ENCODE measurements at regions of chr1 and their contacts with region 1.

Region 1: DNA sequence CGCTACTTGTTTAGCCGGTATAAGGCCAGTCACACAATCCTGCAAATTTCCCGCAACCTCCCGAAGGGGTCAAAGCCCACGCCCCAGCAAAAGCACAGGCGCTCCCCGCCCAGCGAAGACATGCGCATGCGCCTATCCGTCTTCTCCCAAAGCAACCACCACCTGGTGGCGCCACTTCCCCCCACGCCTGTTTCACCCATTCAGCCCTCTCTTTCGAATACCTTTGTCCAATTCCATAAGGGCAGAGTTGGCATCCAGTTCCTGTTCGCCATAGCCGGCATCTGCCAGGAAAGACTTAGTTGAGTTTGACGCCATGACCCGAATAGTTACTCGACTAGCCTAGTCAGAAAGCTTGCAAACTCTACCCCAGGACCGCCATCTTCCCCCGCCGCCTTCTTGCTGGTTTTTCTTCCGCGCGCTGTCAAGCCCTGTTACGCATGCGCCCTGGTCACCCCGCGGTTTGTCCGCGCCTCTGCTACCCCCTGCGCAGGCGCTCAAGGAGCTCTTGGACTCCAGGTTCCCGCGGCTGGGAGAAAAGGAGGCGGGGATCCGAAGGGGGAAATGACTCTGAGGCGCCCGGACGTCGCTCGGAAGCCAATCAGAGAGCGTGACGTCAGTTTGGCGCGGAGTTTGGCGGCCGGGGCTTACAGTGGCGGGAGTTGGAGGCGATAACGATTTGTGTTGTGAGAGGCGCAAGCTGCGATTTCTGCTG is at the starts of genes DTL and INTS7:
- DNase-seq: peak; percentile 96 to 99
- H3K4me3 ChIP-seq: peak within 1 kb of the TSS; percentile 64 to 78
- H3K27ac ChIP-seq: peak within 1 kb of the TSS; percentile 77 to 85
- H3K4me1 ChIP-seq: peaks cover 0 to 12% of the 10 kb centered on the region in 2 donors
- H3K27me3 ChIP-seq: no peaks in the 10 kb centered on the region
- CTCF ChIP-seq: peak; percentile 85 to 95 (median 90)
- total RNA-seq, gene DTL: not detected
- total RNA-seq, gene INTS7: 10.5 TPM

Region 2: DNA sequence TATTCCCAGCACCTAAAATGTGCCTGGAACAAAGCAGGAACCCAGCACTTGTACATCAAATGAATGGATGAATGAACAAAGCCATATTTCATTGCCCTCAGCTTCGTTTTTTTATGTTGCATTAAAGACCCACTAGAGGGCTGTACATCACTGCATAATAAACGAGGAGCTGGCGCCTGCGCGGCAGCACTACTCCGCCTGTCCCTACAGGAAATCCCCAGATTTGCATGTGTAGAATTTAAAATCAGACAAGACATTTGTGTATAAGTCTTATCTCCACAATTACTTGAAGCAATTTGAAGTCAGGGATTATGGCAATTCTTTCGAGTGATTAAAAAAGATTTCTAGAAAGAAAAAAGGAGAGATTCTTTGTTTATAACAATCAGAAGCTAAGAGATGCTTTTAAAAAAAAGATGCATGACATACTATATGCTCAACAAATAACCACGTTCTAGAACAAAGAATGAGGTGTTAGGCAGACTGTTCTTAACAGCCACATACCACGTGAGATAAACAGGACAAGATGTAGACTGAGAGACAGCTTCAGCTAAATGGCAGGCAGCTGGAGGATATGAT is 354.4 kb before region 1 on chr1:
- intact Hi-C with region 1: loop called (anchors 1 kb)
- DNase-seq: peak in 1 of 2 donors; percentile 75
- H3K4me3 ChIP-seq: no peak overlapping the region
- H3K27ac ChIP-seq: no peak overlapping the region
- H3K4me1 ChIP-seq: no peaks in the 10 kb centered on the region
- H3K27me3 ChIP-seq: no peaks in the 10 kb centered on the region
- CTCF ChIP-seq: peak; percentile 53 to 71 (median 69)

Region 3: GRCh38 chr1:212012034-212012740 is 23.1 kb before region 1 on chr1:
- intact Hi-C with region 1: loop called (anchors 1 kb)
- DNase-seq: peak in 1 of 2 donors; percentile 78
- H3K4me3 ChIP-seq: no peak overlapping the region
- H3K27ac ChIP-seq: no peak overlapping the region
- H3K4me1 ChIP-seq: no peaks in the 10 kb centered on the region
- H3K27me3 ChIP-seq: no peaks in the 10 kb centered on the region
- CTCF ChIP-seq: peak; percentile 84 to 94 (median 92)

Region 4: DNA sequence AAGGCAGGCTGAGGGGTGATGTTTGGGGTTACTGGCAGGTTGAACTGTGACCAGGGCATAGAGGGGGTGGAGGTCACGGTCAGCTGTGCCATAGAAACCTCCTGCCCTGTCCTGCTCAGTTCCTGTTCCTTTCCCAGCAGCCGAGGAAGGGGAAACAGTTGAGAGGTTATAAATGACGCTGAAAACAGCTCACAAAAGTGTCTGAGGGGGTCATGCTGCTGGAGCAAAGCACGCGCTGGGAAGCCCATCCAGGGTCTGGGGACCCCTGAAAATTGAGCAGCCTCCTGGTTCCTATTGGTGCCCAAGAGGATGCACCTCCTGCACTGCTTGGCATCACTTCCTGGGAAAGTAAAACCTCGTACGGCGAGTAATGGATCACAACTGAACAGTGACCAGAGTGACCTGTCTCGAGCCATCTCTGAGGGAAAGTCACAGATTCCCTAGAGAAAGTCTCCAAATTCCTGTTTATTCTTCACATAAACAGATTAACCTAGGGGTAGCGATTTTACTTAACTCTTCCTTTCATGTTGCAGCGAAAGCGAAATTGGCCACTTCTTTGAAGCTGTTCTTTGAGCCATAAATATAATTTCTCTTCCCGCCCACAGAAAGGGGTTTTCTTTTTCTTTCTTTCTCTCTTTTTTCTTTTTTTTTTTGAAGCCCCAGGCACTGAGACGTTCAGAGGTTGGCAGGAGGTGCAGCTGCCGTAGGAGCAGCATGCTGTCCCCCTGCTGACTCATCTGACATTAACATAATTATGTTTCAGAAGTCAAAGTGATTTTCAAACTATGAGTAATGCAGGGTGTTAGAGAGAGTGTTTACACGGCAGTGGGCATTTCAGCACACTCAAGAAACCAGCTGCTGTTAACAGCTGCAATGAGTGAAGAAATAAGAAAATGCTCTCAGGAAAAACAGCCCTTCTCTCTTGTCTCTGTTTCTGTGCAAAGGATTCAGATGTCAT is 531.5 kb after region 1 on chr1:
- intact Hi-C with region 1: loop called (anchors 10 kb)
- DNase-seq: no peak
- H3K4me3 ChIP-seq: peak overlapping the region; percentile 51 to 60
- H3K27ac ChIP-seq: peak overlapping the region; percentile 54 to 61
- H3K4me1 ChIP-seq: peaks cover 4 to 10% of the 10 kb centered on the region in 2 donors
- H3K27me3 ChIP-seq: no peaks in the 10 kb centered on the region
- CTCF ChIP-seq: no peak

Region 5: DNA sequence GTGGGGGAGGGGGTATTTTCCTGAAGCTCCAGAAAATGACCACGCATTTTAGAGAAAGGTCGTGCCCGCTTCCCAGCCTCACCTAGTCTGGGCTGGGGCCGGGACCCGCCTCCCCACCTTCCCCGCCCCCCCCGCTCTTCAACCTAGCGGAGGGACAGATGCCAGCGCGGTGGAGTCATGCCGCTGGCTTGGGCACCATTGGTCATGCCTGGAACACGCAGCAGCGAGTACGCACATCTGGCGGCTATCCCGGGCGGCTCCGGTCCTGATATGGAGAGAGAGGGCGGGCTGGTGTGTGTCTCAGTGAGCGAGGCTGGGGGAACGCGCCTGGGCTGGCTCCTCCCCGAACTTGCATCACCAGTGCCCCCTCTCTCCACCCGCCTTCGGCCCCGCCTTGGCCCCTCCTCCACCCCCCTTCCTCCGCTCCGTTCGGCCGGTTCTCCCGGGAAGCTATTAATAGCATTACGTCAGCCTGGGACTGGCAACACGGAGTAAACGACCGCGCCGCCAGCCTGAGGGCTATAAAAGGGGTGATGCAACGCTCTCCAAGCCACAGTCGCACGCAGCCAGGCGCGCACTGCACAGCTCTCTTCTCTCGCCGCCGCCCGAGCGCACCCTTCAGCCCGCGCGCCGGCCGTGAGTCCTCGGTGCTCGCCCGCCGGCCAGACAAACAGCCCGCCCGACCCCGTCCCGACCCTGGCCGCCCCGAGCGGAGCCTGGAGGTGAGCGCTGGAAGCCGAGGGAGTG is 573.1 kb after region 1 on chr1 and contains the start of gene ATF3:
- intact Hi-C with region 1: loop called (anchors 1 kb)
- DNase-seq: peak; percentile 99 to 100
- H3K4me3 ChIP-seq: peak within 1 kb of the TSS; percentile 64 to 78
- H3K27ac ChIP-seq: peak within 1 kb of the TSS; percentile 96 to 99
- H3K4me1 ChIP-seq: peaks cover 0 to 25% of the 10 kb centered on the region in 2 donors
- H3K27me3 ChIP-seq: no peaks in the 10 kb centered on the region
- CTCF ChIP-seq: no peak
- total RNA-seq, gene ATF3: 79.1 TPM

Measured in ascending aorta (tissue), 2 donors.